PC-3 (cell line): ENCODE measurements at regions of chrX and their contacts with region 1.

Region 1: DNA sequence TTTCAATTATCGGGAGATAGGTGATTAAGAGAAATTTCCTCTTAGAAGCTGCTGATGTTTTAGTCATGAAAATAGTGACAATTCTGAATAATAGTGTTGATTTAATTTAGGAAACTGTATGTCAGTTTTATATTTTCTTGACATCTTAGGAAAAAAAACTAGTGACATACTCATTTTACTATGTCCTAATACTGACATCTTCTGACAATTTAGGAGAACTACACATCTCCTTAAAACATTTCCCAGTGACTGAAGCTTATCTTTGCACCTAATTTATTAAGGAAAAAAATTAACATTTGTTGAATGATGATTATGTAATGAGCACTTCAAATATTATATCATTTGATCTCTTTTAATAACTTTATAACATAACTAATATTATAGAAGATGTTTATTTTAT is 42.0 kb upstream of the RBMXL3 start:
- DNase-seq: peak; percentile 57
- ATAC-seq: no peak
- H3K4me3 ChIP-seq: no peak overlapping the region
- H3K27ac ChIP-seq: no peak overlapping the region
- H3K4me1 ChIP-seq: no peaks in the 10 kb centered on the region
- H3K27me3 ChIP-seq: no peaks in the 10 kb centered on the region
- CTCF ChIP-seq: peak; percentile 67

Region 2: DNA sequence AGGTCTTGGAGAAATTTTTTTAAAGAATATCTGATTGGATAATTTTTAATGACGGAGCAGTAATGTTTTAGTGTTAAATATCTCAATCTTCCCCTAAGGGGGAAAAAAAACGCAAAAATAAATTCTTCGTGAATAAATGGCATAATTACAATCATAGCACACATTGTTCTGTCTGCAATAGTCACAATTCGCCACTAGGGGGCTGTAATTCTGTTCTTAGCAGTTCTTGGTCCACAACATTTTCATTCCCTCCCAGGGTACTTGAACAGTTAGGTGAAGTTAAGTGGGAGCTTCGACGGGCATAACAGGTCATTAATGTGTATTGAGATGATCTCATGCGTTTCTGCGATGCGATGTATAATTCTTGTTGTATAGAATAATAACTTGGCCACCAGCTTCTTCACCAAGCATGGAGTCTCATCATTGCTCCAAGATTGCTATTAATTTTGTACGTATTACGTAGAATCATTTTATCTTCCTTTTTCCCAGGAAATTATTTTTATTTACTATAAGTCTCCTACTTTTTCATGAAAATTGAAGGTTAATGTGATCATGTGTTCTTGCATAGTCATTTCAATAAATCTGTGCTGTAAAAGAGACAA is 536.1 kb before region 1 on chrX:
- CTCF ChIA-PET with region 1: no interaction called
- POLR2A ChIA-PET with region 1: no interaction called
- intact Hi-C with region 1: loop called (anchors 1 kb)
- DNase-seq: peak; percentile 65
- ATAC-seq: peak; percentile 35; the same call in 1 of the 2 replicates
- H3K4me3 ChIP-seq: no peak overlapping the region
- H3K27ac ChIP-seq: no peak overlapping the region
- H3K4me1 ChIP-seq: no peaks in the 10 kb centered on the region
- H3K27me3 ChIP-seq: no peaks in the 10 kb centered on the region
- CTCF ChIP-seq: peak; percentile 79

Region 3: DNA sequence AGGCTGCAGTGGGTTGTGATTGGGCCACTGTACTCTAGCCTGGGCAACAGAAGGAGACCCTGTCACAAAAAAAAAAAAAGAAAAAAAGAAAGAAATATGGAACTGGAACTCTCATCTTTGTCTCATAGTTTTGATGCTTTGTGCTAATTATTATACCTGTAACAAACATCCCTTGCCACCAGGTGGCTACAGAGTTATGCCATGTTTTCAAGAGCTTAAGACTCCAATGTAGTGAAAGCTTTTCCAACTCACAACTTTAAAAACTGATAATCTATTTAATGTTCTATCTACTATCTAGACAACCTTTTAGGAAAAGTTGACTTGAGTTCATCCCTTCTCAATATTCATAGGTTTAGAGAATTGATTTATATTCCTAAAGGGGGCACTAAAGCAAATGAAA is 520.9 kb before region 1 on chrX:
- CTCF ChIA-PET with region 1: interaction called, 5 read pairs
- POLR2A ChIA-PET with region 1: no interaction called
- intact Hi-C with region 1: loop called (anchors 1 kb)
- DNase-seq: peak; percentile 39
- ATAC-seq: no peak
- H3K4me3 ChIP-seq: no peak overlapping the region
- H3K27ac ChIP-seq: no peak overlapping the region
- H3K4me1 ChIP-seq: no peaks in the 10 kb centered on the region
- H3K27me3 ChIP-seq: no peaks in the 10 kb centered on the region
- CTCF ChIP-seq: peak; percentile 55; the same call in 1 of the 2 replicates

Region 4: GRCh38 chrX:114959729-114960128 is 187.5 kb before region 1 on chrX:
- CTCF ChIA-PET with region 1: no interaction called
- POLR2A ChIA-PET with region 1: no interaction called
- intact Hi-C with region 1: loop called (anchors 5 kb)
- DNase-seq: peak; percentile 52
- ATAC-seq: no peak
- H3K4me3 ChIP-seq: no peak overlapping the region
- H3K27ac ChIP-seq: no peak overlapping the region
- H3K4me1 ChIP-seq: no peaks in the 10 kb centered on the region
- H3K27me3 ChIP-seq: no peaks in the 10 kb centered on the region
- CTCF ChIP-seq: peak; percentile 68

Region 5: GRCh38 chrX:115018037-115018647 is 129.1 kb before region 1 on chrX:
- CTCF ChIA-PET with region 1: no interaction called
- POLR2A ChIA-PET with region 1: no interaction called
- intact Hi-C with region 1: loop called (anchors 10 kb)
- DNase-seq: no peak
- ATAC-seq: no peak
- H3K4me3 ChIP-seq: no peak overlapping the region
- H3K27ac ChIP-seq: peak overlapping the region; percentile 93
- H3K4me1 ChIP-seq: peaks cover 44% of the 10 kb centered on the region
- H3K27me3 ChIP-seq: no peaks in the 10 kb centered on the region
- CTCF ChIP-seq: no peak; the same call in 1 of the 2 replicates

Region 6: GRCh38 chrX:115344885-115345614 is 197.8 kb after region 1 on chrX:
- CTCF ChIA-PET with region 1: no interaction called
- POLR2A ChIA-PET with region 1: no interaction called
- intact Hi-C with region 1: no loop called
- DNase-seq: peak; percentile 86
- ATAC-seq: peak; percentile 90
- H3K4me3 ChIP-seq: no peak overlapping the region
- H3K27ac ChIP-seq: peak overlapping the region; percentile 74
- H3K4me1 ChIP-seq: peaks cover 16% of the 10 kb centered on the region
- H3K27me3 ChIP-seq: no peaks in the 10 kb centered on the region
- CTCF ChIP-seq: no peak